ENCODE measurements at regions of chr13 and their contacts with region 1.

Region 1: GRCh38 chr13:41286370-41286769 is 23.0 kb upstream of the MTRF1 start:
- DNase-seq: peak in 2 of 9 experiments; percentile 30 to 59
- ATAC-seq: peak; percentile 91
- H3K4me3 ChIP-seq: peak overlapping the region in 1 of 2 experiments; percentile 23
- H3K4me3 Mint-ChIP-seq: peak overlapping the region; percentile 30
- H3K27ac ChIP-seq: peak overlapping the region; percentile 13 to 29
- H3K27ac Mint-ChIP-seq: peak overlapping the region; percentile 88
- H3K4me1 ChIP-seq: peaks cover 32% of the 10 kb centered on the region
- H3K4me1 Mint-ChIP-seq: peaks cover 46% of the 10 kb centered on the region
- H3K27me3 ChIP-seq: no peaks in the 10 kb centered on the region
- H3K27me3 Mint-ChIP-seq: no peaks in the 10 kb centered on the region
- CTCF ChIP-seq: no peak

Region 2: GRCh38 chr13:39935155-39935554 is 1351.2 kb before region 1 on chr13:
- CTCF ChIA-PET with region 1: no interaction called
- POLR2A ChIA-PET with region 1: no interaction called
- intact Hi-C with region 1: no loop called
- DNase-seq: no peak
- ATAC-seq: no peak
- H3K4me3 ChIP-seq: no peak overlapping the region
- H3K4me3 Mint-ChIP-seq: no peak overlapping the region
- H3K27ac ChIP-seq: no peak overlapping the region
- H3K27ac Mint-ChIP-seq: no peak overlapping the region
- H3K4me1 ChIP-seq: peaks cover 5% of the 10 kb centered on the region
- H3K4me1 Mint-ChIP-seq: peaks cover 7% of the 10 kb centered on the region
- H3K27me3 ChIP-seq: no peaks in the 10 kb centered on the region
- H3K27me3 Mint-ChIP-seq: no peaks in the 10 kb centered on the region
- CTCF ChIP-seq: no peak

Region 3: DNA sequence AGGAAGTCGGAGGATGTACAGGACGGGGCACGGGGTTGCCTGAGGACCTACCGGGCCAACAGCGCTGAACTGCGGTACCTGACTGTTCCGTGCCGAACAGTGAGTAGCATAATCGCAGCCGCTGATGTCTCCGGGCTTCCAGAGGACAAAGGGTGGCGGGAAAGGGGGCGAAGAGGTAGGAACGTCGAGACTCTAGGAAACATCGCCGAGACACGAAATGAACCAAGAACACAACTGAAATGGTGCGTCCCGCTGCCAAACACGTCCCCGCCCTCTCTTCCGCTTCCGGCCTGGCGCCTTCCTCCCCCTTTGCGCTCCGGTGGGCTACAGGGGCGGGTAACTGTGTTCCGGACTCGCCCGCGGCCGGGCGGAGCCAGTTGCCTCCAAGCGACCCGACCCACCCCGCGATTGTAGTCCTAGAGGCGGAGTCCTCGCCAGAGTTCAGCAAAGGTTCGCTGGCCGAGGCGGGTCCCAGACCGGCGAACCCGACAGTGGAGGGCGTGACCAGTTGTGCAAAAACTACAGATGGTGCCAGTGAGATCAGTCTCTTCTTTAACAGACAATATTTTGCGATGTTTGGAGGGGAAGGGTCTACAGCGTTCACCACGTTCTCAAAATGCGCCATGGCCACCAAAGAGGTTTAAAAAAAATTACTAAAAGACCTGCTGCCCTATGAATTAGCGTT is 515.3 kb before region 1 on chr13 and contains the start of gene MRPS31:
- CTCF ChIA-PET with region 1: no interaction called
- POLR2A ChIA-PET with region 1: no interaction called
- intact Hi-C with region 1: no loop called
- DNase-seq: peak; percentile 88 to 98 (median 95)
- ATAC-seq: peak; percentile 94
- H3K4me3 ChIP-seq: peak within 1 kb of the TSS; percentile 89 to 92
- H3K4me3 Mint-ChIP-seq: peak within 1 kb of the TSS; percentile 99
- H3K27ac ChIP-seq: peak within 1 kb of the TSS; percentile 74 to 87
- H3K27ac Mint-ChIP-seq: peak within 1 kb of the TSS; percentile 98
- H3K4me1 ChIP-seq: peaks cover 20% of the 10 kb centered on the region
- H3K4me1 Mint-ChIP-seq: peaks cover 41% of the 10 kb centered on the region
- H3K27me3 ChIP-seq: no peaks in the 10 kb centered on the region
- H3K27me3 Mint-ChIP-seq: no peaks in the 10 kb centered on the region
- CTCF ChIP-seq: no peak
- total RNA-seq, gene MRPS31: 7.3 to 7.5 TPM

Region 4: DNA sequence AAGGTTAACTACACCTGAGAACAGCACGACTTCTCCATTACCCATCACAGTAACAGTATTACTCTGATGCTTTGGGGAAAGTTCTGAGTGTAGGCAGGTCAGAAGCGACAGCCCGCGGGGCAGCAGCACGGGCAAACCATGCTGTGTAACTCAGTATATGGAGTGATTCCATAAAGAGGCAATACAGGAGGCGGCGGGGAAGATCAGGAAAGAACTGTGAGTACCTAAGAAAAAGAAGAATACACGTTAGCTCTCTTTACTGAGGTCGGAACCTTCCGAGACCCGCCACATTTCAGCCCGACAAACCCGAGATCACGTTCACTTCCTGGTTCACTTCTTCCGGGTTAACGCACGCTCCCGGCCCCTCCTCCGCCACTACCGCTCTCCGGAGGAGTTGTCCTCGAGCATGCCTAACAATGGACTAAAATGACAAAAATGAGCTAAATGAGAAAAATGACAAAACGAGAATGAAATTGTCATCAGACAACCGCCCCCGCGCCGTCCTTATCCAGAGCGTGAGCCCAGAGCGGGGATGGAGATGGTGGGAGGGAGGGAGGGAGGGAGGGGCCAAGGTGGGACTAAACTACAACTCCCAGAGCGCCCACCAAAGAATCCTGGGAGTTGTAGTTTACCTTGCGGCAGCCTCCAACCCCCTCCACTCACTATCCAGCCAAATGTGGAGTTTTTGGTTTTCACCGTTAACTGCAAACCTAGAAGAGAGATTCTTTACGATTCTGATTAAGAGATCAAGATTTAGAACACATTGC is 22.9 kb before region 1 on chr13 and contains the start of gene MTRF1:
- CTCF ChIA-PET with region 1: no interaction called
- POLR2A ChIA-PET with region 1: interaction called, 10 read pairs
- intact Hi-C with region 1: loop called in 1 of 2 experiments (anchors 2 kb)
- DNase-seq: peak; percentile 65 to 91 (median 82)
- ATAC-seq: peak; percentile 90
- H3K4me3 ChIP-seq: peak within 1 kb of the TSS; percentile 68 to 72
- H3K4me3 Mint-ChIP-seq: peak within 1 kb of the TSS; percentile 99
- H3K27ac ChIP-seq: peak within 1 kb of the TSS; percentile 73 to 84
- H3K27ac Mint-ChIP-seq: peak within 1 kb of the TSS; percentile 99
- H3K4me1 ChIP-seq: peaks cover 26% of the 10 kb centered on the region
- H3K4me1 Mint-ChIP-seq: peaks cover 40% of the 10 kb centered on the region
- H3K27me3 ChIP-seq: no peaks in the 10 kb centered on the region
- H3K27me3 Mint-ChIP-seq: no peaks in the 10 kb centered on the region
- CTCF ChIP-seq: no peak
- total RNA-seq, gene MTRF1: 26.2 to 26.9 TPM

Region 5: GRCh38 chr13:41271456-41272285 is 14.7 kb before region 1 on chr13:
- CTCF ChIA-PET with region 1: interaction called, 5 read pairs
- POLR2A ChIA-PET with region 1: interaction called, 11 read pairs
- intact Hi-C with region 1: loop called in 1 of 2 experiments (anchors 2 kb)
- DNase-seq: peak in 5 of 9 experiments; percentile 6 to 74 (median 48)
- ATAC-seq: peak; percentile 83
- H3K4me3 ChIP-seq: peak overlapping the region in 1 of 2 experiments; percentile 12
- H3K4me3 Mint-ChIP-seq: peak overlapping the region; percentile 59
- H3K27ac ChIP-seq: peak overlapping the region; percentile 36 to 49
- H3K27ac Mint-ChIP-seq: peak overlapping the region; percentile 91
- H3K4me1 ChIP-seq: peaks cover 43% of the 10 kb centered on the region
- H3K4me1 Mint-ChIP-seq: peaks cover 38% of the 10 kb centered on the region
- H3K27me3 ChIP-seq: no peaks in the 10 kb centered on the region
- H3K27me3 Mint-ChIP-seq: no peaks in the 10 kb centered on the region
- CTCF ChIP-seq: no peak

Measured in CD8-positive, alpha-beta T cell (primary cell).